Cardiac septum (tissue), 1 donor: ENCODE measurements at regions of chr1 and their contacts with region 1.

Region 1: GRCh38 chr1:226940029-226940805 is at the start of gene COQ8A:
- DNase-seq: peak; percentile 100
- total RNA-seq, gene COQ8A: 168 TPM

Region 2: DNA sequence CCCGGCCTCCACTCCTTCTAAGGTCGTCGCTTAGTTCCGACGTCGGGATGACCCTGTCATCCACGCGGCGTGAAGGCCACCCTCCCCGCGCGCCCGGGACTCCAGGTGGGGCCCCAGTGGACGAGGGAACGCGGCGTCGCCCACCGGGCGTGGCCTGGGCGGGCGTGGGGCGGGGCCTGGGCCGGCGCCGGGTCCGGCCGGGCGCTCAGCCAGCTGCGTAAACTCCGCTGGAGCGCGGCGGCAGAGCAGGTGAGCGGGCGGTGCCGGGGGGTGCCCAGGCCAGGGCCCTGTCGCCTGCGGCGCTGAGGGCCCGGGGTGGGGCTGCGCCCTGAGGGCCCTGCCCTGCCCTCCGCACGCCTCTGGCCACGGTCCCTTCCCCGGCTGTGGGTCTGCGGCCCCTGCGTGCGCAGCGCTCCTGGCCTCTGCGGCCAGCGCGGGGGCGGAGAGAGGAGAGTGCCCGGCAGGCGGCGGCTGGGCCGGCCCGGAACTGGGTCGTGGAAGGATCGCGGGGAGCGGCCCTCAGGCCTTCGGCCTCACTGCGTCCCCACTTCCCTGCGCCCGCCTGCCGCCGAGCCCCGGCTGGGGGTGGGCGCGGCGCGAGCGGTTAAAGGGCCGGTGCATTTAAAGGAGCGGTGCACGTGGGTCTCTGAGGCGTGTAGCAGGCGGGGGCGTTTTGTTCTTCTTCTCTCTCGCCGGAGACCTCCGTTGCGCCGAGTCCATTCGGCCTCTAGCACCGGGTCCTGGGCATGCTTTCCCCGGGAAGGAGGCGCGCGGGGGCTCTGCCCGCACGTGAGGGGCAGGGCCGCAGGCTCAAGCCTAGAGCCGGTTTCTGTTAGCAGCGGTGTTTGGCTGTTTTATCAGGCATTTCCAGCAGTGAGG is 69.6 kb before region 1 on chr1 and contains the start of gene PSEN2:
- intact Hi-C with region 1: loop called (anchors 5 kb)
- DNase-seq: peak; percentile 88
- total RNA-seq, gene PSEN2: 21.5 TPM

Region 3: GRCh38 chr1:226920446-226920894 is 19.7 kb before region 1 on chr1:
- intact Hi-C with region 1: loop called (anchors 2 kb)
- DNase-seq: peak; percentile 81

Region 4: DNA sequence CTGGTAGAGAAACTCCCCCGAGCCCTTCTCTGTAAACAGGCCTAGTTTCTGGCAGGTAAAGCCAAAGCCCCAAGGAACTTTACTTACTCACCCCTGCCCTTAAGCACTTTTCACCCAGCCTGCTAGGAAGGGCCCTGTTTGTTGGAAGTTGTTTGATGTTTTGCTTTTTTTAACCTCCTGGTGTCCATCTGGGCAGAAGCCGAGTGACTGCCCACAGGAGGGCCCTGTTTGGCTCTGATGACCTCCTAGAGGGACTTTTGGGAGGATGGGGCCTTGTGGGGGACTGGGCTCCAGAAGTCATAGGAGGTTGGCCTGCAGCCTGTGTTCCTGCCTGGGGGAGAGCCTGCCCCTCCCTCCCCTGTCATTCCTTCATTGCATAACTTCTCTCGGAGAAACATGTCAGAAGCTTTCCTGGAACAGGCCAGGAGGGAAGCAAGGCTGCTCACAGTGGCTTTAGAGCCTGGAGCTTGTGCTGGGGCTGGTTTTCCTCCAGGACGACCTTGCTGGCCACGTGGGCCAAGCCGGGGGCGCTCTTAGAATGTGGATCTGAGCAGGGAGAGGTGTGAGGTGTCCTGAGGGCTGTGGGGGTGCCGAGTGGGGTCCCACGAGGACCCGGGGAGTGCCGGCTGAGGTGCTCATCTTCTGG is 33.8 kb after region 1 on chr1:
- intact Hi-C with region 1: loop called (anchors 2 kb)
- DNase-seq: no peak

Region 5: GRCh38 chr1:226990133-226990716 is 50.0 kb after region 1 on chr1:
- intact Hi-C with region 1: no loop called
- DNase-seq: no peak